Lower leg skin (tissue), 4 donors: ENCODE measurements at regions of chr2 and their contacts with region 1.

Region 1: DNA sequence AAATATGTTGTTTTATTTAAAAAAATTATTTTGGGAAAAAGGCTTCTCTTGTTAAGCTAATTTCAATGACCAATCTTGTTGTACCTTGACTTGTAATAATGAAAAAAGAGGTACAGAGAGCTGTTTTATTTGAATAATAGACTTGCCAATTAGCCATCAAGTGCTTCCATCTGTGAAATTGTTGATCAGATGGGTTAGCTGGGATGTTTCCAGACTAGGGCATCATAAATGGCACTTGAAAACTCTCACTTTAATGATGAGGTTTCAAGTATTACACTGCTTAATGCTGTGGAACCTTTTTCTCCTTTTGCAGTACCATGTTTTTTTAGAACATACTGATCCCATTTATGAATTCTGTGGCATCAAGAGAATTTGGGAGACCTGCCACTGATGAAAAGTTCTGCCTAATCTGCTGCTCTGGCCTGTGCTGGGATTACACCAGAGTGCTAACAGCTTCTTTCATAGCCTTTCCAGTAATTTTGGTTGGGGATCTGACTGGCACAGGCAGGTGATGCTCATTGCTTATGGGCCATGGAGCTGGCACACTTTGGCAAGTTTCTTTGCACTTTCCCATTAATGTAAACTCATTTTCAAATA is 24.2 kb downstream of the PSMD14 start:
- DNase-seq: no peak
- H3K4me3 ChIP-seq: no peak overlapping the region
- CTCF ChIP-seq: no peak
- POLR2A ChIP-seq: no peak

Region 2: GRCh38 chr2:161938339-161938738 is 605.9 kb after region 1 on chr2:
- intact Hi-C with region 1: loop called (anchors 5 kb)
- DNase-seq: no peak
- H3K4me3 ChIP-seq: no peak overlapping the region
- CTCF ChIP-seq: no peak
- POLR2A ChIP-seq: no peak